ENCODE measurements at regions of chr7 and their contacts with region 1.

Region 1: GRCh38 chr7:102412548-102412947 is 16.4 kb downstream of the PRKRIP1 start:
- DNase-seq: no peak
- ATAC-seq: no peak
- H3K4me3 Mint-ChIP-seq: no peak overlapping the region
- H3K27ac Mint-ChIP-seq: peak overlapping the region; percentile 41
- H3K4me1 Mint-ChIP-seq: peaks cover 76% of the 10 kb centered on the region
- H3K27me3 Mint-ChIP-seq: no peaks in the 10 kb centered on the region
- CTCF ChIP-seq: no peak

Region 2: GRCh38 chr7:102433219-102434038 is 20.9 kb after region 1 on chr7 and contains the start of gene ORAI2:
- CTCF ChIA-PET with region 1: interaction called, 15 read pairs
- POLR2A ChIA-PET with region 1: interaction called, 886 read pairs
- intact Hi-C with region 1: no loop called
- DNase-seq: peak; percentile 89
- ATAC-seq: peak; percentile 57
- H3K4me3 Mint-ChIP-seq: peak within 1 kb of the TSS; percentile 89
- H3K27ac Mint-ChIP-seq: peak within 1 kb of the TSS; percentile 100
- H3K4me1 Mint-ChIP-seq: peaks cover 80% of the 10 kb centered on the region
- H3K27me3 Mint-ChIP-seq: no peaks in the 10 kb centered on the region
- CTCF ChIP-seq: no peak
- total RNA-seq, gene ORAI2: 167 and 184 TPM in 2 replicates

Region 3: GRCh38 chr7:102440078-102440795 is 27.7 kb after region 1 on chr7:
- CTCF ChIA-PET with region 1: interaction called, 219 read pairs
- POLR2A ChIA-PET with region 1: interaction called, 886 read pairs
- intact Hi-C with region 1: loop called (anchors 1 kb)
- DNase-seq: no peak
- ATAC-seq: no peak
- H3K4me3 Mint-ChIP-seq: no peak overlapping the region
- H3K27ac Mint-ChIP-seq: peak overlapping the region; percentile 93
- H3K4me1 Mint-ChIP-seq: peaks cover 67% of the 10 kb centered on the region
- H3K27me3 Mint-ChIP-seq: no peaks in the 10 kb centered on the region
- CTCF ChIP-seq: no peak

Region 4: DNA sequence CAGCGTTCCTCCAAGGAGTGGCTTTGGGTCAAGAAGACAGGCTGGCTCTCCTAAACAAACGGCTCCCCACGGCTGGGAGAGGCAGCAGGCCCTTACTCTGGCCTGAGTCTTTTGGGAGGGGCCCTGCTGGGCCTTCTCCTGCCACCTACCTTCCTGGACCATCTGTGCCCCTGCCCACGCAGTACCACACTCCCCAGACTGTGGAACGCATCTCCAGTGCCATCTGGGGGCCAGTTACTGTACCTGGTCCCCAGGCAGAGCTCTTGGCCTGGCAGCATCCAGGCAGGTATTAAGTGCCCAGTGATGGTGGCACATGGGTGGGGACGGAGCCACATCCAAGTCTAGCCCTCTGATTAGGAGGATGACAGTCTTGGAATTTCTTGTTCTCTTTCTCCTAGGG is 37.7 kb after region 1 on chr7:
- CTCF ChIA-PET with region 1: interaction called, 219 read pairs
- POLR2A ChIA-PET with region 1: interaction called, 886 read pairs
- intact Hi-C with region 1: loop called (anchors 1 kb)
- DNase-seq: peak; percentile 46
- ATAC-seq: peak; percentile 88
- H3K4me3 Mint-ChIP-seq: no peak overlapping the region
- H3K27ac Mint-ChIP-seq: peak overlapping the region; percentile 63
- H3K4me1 Mint-ChIP-seq: peaks cover 29% of the 10 kb centered on the region
- H3K27me3 Mint-ChIP-seq: no peaks in the 10 kb centered on the region
- CTCF ChIP-seq: no peak

Region 5: GRCh38 chr7:103031781-103032180 is 619.2 kb after region 1 on chr7:
- CTCF ChIA-PET with region 1: no interaction called
- POLR2A ChIA-PET with region 1: no interaction called
- intact Hi-C with region 1: no loop called
- DNase-seq: no peak
- ATAC-seq: no peak
- H3K4me3 Mint-ChIP-seq: no peak overlapping the region
- H3K27ac Mint-ChIP-seq: no peak overlapping the region
- H3K4me1 Mint-ChIP-seq: no peaks in the 10 kb centered on the region
- H3K27me3 Mint-ChIP-seq: no peaks in the 10 kb centered on the region
- CTCF ChIP-seq: no peak